ENCODE measurements at regions of chr4 and their contacts with region 1.

Region 1: GRCh38 chr4:113153529-113154101 is 104.2 kb downstream of the ANK2 start:
- DNase-seq: peak; percentile 70
- H3K4me3 Mint-ChIP-seq: no peak overlapping the region
- H3K27ac Mint-ChIP-seq: no peak overlapping the region
- H3K4me1 Mint-ChIP-seq: no peaks in the 10 kb centered on the region
- H3K27me3 Mint-ChIP-seq: no peaks in the 10 kb centered on the region
- CTCF ChIP-seq: no peak

Region 2: DNA sequence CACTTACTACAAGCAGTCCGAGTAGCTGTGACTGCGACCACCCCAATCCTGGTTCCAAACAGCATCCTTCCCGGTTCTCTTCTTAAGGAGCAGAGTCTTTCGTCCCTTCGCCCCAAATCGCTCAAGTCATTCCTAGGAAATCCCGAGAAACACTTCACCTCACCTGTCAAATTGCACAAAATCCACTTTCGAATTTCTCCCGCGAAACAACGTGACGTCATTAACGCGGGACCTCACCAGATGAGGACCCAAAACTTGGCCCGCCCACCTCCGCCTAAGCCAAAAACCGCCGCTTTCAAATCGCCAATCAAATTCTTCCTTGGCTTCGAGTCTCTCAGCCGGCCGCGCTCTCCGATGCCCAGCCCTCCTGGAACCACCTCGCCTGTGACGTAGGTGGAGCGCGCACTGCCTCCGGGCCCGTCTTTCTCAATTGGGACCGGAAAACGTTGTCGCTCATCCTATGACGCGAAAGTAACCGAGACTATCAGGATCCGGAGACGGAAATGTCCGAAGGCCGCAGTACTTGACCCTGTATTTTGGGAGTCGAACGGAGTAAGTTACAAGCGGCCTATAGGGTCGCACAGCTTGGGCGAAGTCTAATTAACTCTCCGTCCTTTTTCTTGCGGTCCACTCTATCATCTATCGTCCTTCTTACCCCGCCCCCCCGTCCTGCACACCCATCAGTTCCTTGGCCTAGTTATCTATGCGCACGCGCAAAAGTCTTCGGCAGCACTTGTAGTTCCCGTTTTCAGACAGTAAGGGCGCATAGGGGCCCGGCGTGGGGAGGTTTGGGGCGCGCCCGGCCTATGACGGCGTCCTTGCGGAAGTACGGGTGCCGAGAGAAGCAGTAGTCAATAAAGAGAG is 516.7 kb before region 1 on chr4 and contains the starts of genes LARP7 and ZGRF1:
- CTCF ChIA-PET with region 1: no interaction called
- POLR2A ChIA-PET with region 1: no interaction called
- intact Hi-C with region 1: loop called (anchors 10 kb)
- DNase-seq: peak; percentile 99
- H3K4me3 Mint-ChIP-seq: no peak within 1 kb of the TSS
- H3K27ac Mint-ChIP-seq: no peak within 1 kb of the TSS
- H3K4me1 Mint-ChIP-seq: peaks cover 13% of the 10 kb centered on the region
- H3K27me3 Mint-ChIP-seq: no peaks in the 10 kb centered on the region
- CTCF ChIP-seq: peak; percentile 88
- total RNA-seq, gene LARP7: 33.8 and 36.3 TPM in 2 replicates
- total RNA-seq, gene ZGRF1: 6.1 and 6.9 TPM in 2 replicates